GM12878 (cell line): ENCODE measurements at regions of chr14 and their contacts with region 1.

Region 1: GRCh38 chr14:30270200-30271161 is 288.5 kb upstream of the G2E3 start:
- DNase-seq: no peak
- ATAC-seq: peak; percentile 100
- H3K4me3 ChIP-seq: no peak overlapping the region
- H3K27ac ChIP-seq: no peak overlapping the region
- H3K4me1 ChIP-seq: no peaks in the 10 kb centered on the region
- H3K27me3 ChIP-seq: no peaks in the 10 kb centered on the region
- CTCF ChIP-seq: peak; percentile 85 to 95 (median 88)
- EP300 ChIP-seq: no peak
- POLR2A ChIP-seq: no peak
- RAD21 ChIP-seq: peak; percentile 53

Region 2: GRCh38 chr14:30165255-30165654 is 105.2 kb before region 1 on chr14:
- CTCF ChIA-PET with region 1: no interaction called
- POLR2A ChIA-PET with region 1: no interaction called
- RAD21 ChIA-PET with region 1: no interaction called
- SMC1A ChIA-PET with region 1: no interaction called
- in situ Hi-C with region 1: no loop called
- intact Hi-C with region 1: no loop called
- DNase-seq: no peak
- ATAC-seq: no peak
- H3K4me3 ChIP-seq: no peak overlapping the region
- H3K27ac ChIP-seq: no peak overlapping the region
- H3K4me1 ChIP-seq: no peaks in the 10 kb centered on the region
- H3K27me3 ChIP-seq: no peaks in the 10 kb centered on the region
- CTCF ChIP-seq: no peak
- EP300 ChIP-seq: no peak
- POLR2A ChIP-seq: no peak
- RAD21 ChIP-seq: no peak

Region 3: DNA sequence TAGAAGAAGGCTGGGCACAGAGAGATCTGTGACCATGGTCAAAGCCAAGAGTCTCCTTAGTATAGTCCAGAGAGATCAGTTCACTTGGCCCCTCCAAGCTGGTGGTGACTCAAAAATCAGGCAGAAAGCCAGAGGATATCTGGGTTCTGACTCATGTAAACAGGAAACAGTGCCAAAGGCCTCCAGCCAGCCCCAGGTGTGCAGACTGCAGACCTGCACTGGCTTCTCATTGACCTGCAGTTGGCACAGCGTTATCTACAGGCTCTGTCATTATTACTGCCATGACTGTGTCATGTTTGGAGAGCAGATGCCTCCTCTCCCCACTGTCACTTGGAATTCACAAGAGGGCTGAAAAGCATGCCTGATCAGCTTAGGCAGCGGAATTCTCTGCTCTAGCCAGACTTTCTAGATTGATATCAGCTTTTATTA is 47.1 kb before region 1 on chr14:
- CTCF ChIA-PET with region 1: interaction called, 10 read pairs
- POLR2A ChIA-PET with region 1: no interaction called
- RAD21 ChIA-PET with region 1: interaction called, 3 read pairs
- SMC1A ChIA-PET with region 1: no interaction called
- in situ Hi-C with region 1: no loop called
- intact Hi-C with region 1: no loop called
- DNase-seq: no peak
- ATAC-seq: no peak; the same call in 2 of the 3 replicates
- H3K4me3 ChIP-seq: no peak overlapping the region
- H3K27ac ChIP-seq: no peak overlapping the region
- H3K4me1 ChIP-seq: no peaks in the 10 kb centered on the region
- H3K27me3 ChIP-seq: no peaks in the 10 kb centered on the region
- CTCF ChIP-seq: no peak
- EP300 ChIP-seq: no peak
- POLR2A ChIP-seq: no peak
- RAD21 ChIP-seq: no peak

Region 4: GRCh38 chr14:30330445-30330844 is 60.0 kb after region 1 on chr14:
- CTCF ChIA-PET with region 1: interaction called, 13 read pairs
- POLR2A ChIA-PET with region 1: no interaction called
- RAD21 ChIA-PET with region 1: no interaction called
- SMC1A ChIA-PET with region 1: interaction called, 4 read pairs
- in situ Hi-C with region 1: no loop called
- intact Hi-C with region 1: no loop called
- DNase-seq: no peak
- ATAC-seq: no peak
- H3K4me3 ChIP-seq: no peak overlapping the region
- H3K27ac ChIP-seq: no peak overlapping the region
- H3K4me1 ChIP-seq: no peaks in the 10 kb centered on the region
- H3K27me3 ChIP-seq: no peaks in the 10 kb centered on the region
- CTCF ChIP-seq: peak; percentile 3 to 33 (median 24); a peak in 3 of 6 replicates
- EP300 ChIP-seq: no peak
- POLR2A ChIP-seq: no peak
- RAD21 ChIP-seq: no peak

Region 5: GRCh38 chr14:30355431-30355913 is 85.0 kb after region 1 on chr14:
- CTCF ChIA-PET with region 1: interaction called, 11 read pairs
- POLR2A ChIA-PET with region 1: no interaction called
- RAD21 ChIA-PET with region 1: interaction called, 4 read pairs
- SMC1A ChIA-PET with region 1: interaction called, 8 read pairs
- in situ Hi-C with region 1: no loop called
- intact Hi-C with region 1: no loop called
- DNase-seq: peak; percentile 71
- ATAC-seq: peak; percentile 93
- H3K4me3 ChIP-seq: no peak overlapping the region
- H3K27ac ChIP-seq: peak overlapping the region; percentile 46
- H3K4me1 ChIP-seq: peaks cover 10% of the 10 kb centered on the region; the same call in 1 of the 2 replicates
- H3K27me3 ChIP-seq: no peaks in the 10 kb centered on the region
- CTCF ChIP-seq: no peak
- EP300 ChIP-seq: peak; percentile 81 to 88; a peak in 3 of 4 replicates
- POLR2A ChIP-seq: no peak
- RAD21 ChIP-seq: no peak

Region 6: GRCh38 chr14:30443368-30444007 is 173.0 kb after region 1 on chr14:
- CTCF ChIA-PET with region 1: interaction called, 21 read pairs
- POLR2A ChIA-PET with region 1: no interaction called
- RAD21 ChIA-PET with region 1: interaction called, 7 read pairs
- SMC1A ChIA-PET with region 1: interaction called, 12 read pairs
- in situ Hi-C with region 1: no loop called
- intact Hi-C with region 1: loop called (anchors 5 kb)
- DNase-seq: no peak
- ATAC-seq: peak; percentile 57; the same call in 1 of the 3 replicates
- H3K4me3 ChIP-seq: no peak overlapping the region
- H3K27ac ChIP-seq: no peak overlapping the region
- H3K4me1 ChIP-seq: no peaks in the 10 kb centered on the region
- H3K27me3 ChIP-seq: no peaks in the 10 kb centered on the region
- CTCF ChIP-seq: peak; percentile 32 to 71 (median 45); a peak in 5 of 6 replicates
- EP300 ChIP-seq: no peak
- POLR2A ChIP-seq: no peak
- RAD21 ChIP-seq: peak; percentile 80